ENCODE measurements at regions of chrX and their contacts with region 1.

Region 1: GRCh38 chrX:148282504-148282903 is 217.9 kb upstream of the AFF2 start:
- DNase-seq: no peak
- H3K4me3 Mint-ChIP-seq: no peak overlapping the region
- H3K27ac Mint-ChIP-seq: peak overlapping the region; percentile 87
- H3K4me1 Mint-ChIP-seq: peaks cover 27% of the 10 kb centered on the region
- H3K27me3 Mint-ChIP-seq: no peaks in the 10 kb centered on the region

Region 2: DNA sequence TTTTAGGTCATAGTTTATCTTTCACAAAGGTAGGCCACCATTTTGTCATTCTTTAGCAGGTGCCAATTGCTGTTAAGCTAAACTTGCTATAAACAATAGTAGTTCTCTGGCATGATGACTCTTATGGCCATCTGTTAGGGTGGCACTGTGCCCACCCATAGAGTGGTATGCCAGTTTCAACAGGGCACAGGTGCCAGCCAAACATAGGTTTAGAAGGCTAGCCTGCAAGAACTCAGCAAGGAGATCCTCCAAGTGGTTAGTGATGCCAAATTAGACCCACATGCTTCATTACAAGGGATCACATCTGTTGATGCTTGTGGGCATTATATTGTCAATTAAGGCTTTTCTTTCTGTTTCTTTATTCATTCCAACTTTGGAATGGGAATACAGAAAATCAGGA is 96.9 kb before region 1 on chrX:
- intact Hi-C with region 1: no loop called
- DNase-seq: no peak
- H3K4me3 Mint-ChIP-seq: no peak overlapping the region
- H3K27ac Mint-ChIP-seq: no peak overlapping the region
- H3K4me1 Mint-ChIP-seq: no peaks in the 10 kb centered on the region
- H3K27me3 Mint-ChIP-seq: no peaks in the 10 kb centered on the region

Region 3: GRCh38 chrX:148229801-148230303 is 52.7 kb before region 1 on chrX:
- intact Hi-C with region 1: loop called (anchors 10 kb)
- DNase-seq: no peak
- H3K4me3 Mint-ChIP-seq: no peak overlapping the region
- H3K27ac Mint-ChIP-seq: no peak overlapping the region
- H3K4me1 Mint-ChIP-seq: peaks cover 7% of the 10 kb centered on the region
- H3K27me3 Mint-ChIP-seq: no peaks in the 10 kb centered on the region

Region 4: GRCh38 chrX:148310426-148311165 is 28.1 kb after region 1 on chrX:
- intact Hi-C with region 1: loop called (anchors 1 kb)
- DNase-seq: peak; percentile 55
- H3K4me3 Mint-ChIP-seq: no peak overlapping the region
- H3K27ac Mint-ChIP-seq: peak overlapping the region; percentile 83
- H3K4me1 Mint-ChIP-seq: peaks cover 31% of the 10 kb centered on the region
- H3K27me3 Mint-ChIP-seq: no peaks in the 10 kb centered on the region

Region 5: GRCh38 chrX:148322906-148323305 is 40.4 kb after region 1 on chrX:
- intact Hi-C with region 1: no loop called
- DNase-seq: no peak
- H3K4me3 Mint-ChIP-seq: no peak overlapping the region
- H3K27ac Mint-ChIP-seq: no peak overlapping the region
- H3K4me1 Mint-ChIP-seq: peaks cover 5% of the 10 kb centered on the region
- H3K27me3 Mint-ChIP-seq: no peaks in the 10 kb centered on the region

Region 6: GRCh38 chrX:148466292-148466691 is 183.8 kb after region 1 on chrX:
- intact Hi-C with region 1: loop called (anchors 2 kb)
- DNase-seq: no peak
- H3K4me3 Mint-ChIP-seq: no peak overlapping the region
- H3K27ac Mint-ChIP-seq: no peak overlapping the region
- H3K4me1 Mint-ChIP-seq: peaks cover 8% of the 10 kb centered on the region
- H3K27me3 Mint-ChIP-seq: peaks cover 13% of the 10 kb centered on the region

Region 7: GRCh38 chrX:148784856-148785255 is 502.4 kb after region 1 on chrX:
- intact Hi-C with region 1: no loop called
- DNase-seq: no peak
- H3K4me3 Mint-ChIP-seq: no peak overlapping the region
- H3K27ac Mint-ChIP-seq: no peak overlapping the region
- H3K4me1 Mint-ChIP-seq: no peaks in the 10 kb centered on the region
- H3K27me3 Mint-ChIP-seq: no peaks in the 10 kb centered on the region

Region 8: GRCh38 chrX:149198980-149199732 is 916.7 kb after region 1 on chrX:
- intact Hi-C with region 1: loop called (anchors 2 kb)
- DNase-seq: no peak
- H3K4me3 Mint-ChIP-seq: no peak overlapping the region
- H3K27ac Mint-ChIP-seq: peak overlapping the region; percentile 76
- H3K4me1 Mint-ChIP-seq: peaks cover 15% of the 10 kb centered on the region
- H3K27me3 Mint-ChIP-seq: no peaks in the 10 kb centered on the region

Measured in activated T-helper 2 cell treated with anti-CD3 and anti-CD28 coated beads, Interferon-gamma antibody, Interleukin-2, Interleukin-4, amounts not matched to agents 10 μg/mL and 5 μg/mL and 100 μg/mL, durations not matched to agents 14 hours and 24 hours and 36 hours (primary cell).